CD8-positive, alpha-beta T cell (primary cell): ENCODE measurements at regions of chr14 and their contacts with region 1.

Region 1: DNA sequence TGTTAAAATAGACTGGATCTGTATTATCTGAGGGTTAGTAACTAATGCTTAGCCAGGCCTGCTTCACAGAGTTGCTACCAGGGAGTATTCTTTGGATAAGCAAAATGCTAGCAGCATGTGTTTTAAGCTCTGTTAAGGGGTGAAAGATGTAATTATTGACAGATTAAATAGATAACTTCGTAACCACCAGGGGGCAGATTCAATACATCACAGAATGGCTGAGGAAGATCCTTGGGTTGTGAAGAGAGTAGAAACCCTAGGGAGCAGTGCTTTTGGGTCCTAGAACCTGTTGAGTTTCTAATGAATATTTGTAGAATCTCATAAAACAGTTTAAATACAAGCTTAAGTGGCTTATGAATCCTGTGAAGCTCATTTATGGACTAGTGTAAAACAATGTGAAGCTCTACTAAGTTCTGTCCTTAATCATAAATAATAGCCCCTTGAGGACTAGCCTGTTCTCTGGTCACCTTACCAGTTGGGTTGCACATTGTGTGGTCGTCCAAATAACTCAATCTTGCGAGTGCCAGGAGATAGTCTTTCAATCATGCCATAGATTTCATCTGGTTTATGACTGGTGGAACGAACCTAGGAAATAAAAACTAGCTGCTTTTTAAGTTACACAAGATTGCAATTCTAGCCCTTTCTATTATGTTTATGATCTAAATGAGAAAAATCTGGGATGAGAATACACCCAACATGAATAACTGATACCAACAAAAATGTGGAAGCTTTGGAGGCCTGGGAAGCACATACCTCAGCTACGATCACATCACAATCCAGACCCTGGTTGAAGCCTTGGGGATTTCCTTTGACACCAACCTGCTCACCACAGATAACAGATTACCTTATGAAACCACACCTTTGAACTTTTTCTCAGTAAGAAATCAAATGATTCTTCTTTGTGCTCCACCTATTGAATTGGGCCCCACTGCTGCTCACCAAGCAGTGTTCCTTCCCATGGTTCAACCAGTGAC is 12.3 kb downstream of the METTL3 start:
- DNase-seq: peak in 3 of 9 experiments; percentile 47 to 76 (median 67)
- ATAC-seq: peak; percentile 77
- H3K4me3 ChIP-seq: no peak overlapping the region
- H3K4me3 Mint-ChIP-seq: no peak overlapping the region
- H3K27ac ChIP-seq: peak overlapping the region; percentile 6 to 23
- H3K27ac Mint-ChIP-seq: peak overlapping the region; percentile 73
- H3K4me1 ChIP-seq: peaks cover 13% of the 10 kb centered on the region
- H3K4me1 Mint-ChIP-seq: peaks cover 19% of the 10 kb centered on the region
- H3K27me3 ChIP-seq: no peaks in the 10 kb centered on the region
- H3K27me3 Mint-ChIP-seq: no peaks in the 10 kb centered on the region
- CTCF ChIP-seq: peak; percentile 70

Region 2: DNA sequence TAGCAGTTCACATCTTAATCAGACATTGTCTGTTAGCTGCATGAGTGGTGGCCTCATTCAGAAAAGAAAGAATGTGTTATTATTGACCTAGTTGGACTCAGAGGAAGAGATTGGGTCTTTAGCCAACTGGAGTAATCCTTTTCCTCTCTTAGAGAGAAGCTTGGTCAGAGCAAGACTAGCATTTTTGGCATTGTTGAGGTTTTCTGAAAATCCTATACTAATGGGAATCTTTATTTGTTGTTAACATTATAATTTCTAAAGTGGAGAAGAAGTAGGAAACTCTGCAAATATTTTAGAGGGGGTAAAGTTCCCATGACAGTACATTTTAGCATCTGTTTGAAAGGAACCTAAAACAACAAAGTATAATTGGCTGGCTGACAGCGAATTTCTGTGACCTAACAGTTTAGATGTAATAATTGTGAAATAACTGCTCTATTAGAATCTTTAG is 12.2 kb before region 1 on chr14:
- CTCF ChIA-PET with region 1: interaction called, 12 read pairs
- POLR2A ChIA-PET with region 1: interaction called, 3 read pairs
- intact Hi-C with region 1: no loop called
- DNase-seq: no peak
- ATAC-seq: no peak
- H3K4me3 ChIP-seq: no peak overlapping the region
- H3K4me3 Mint-ChIP-seq: no peak overlapping the region
- H3K27ac ChIP-seq: no peak overlapping the region
- H3K27ac Mint-ChIP-seq: no peak overlapping the region
- H3K4me1 ChIP-seq: no peaks in the 10 kb centered on the region
- H3K4me1 Mint-ChIP-seq: peaks cover 8% of the 10 kb centered on the region
- H3K27me3 ChIP-seq: no peaks in the 10 kb centered on the region
- H3K27me3 Mint-ChIP-seq: no peaks in the 10 kb centered on the region
- CTCF ChIP-seq: no peak

Region 3: DNA sequence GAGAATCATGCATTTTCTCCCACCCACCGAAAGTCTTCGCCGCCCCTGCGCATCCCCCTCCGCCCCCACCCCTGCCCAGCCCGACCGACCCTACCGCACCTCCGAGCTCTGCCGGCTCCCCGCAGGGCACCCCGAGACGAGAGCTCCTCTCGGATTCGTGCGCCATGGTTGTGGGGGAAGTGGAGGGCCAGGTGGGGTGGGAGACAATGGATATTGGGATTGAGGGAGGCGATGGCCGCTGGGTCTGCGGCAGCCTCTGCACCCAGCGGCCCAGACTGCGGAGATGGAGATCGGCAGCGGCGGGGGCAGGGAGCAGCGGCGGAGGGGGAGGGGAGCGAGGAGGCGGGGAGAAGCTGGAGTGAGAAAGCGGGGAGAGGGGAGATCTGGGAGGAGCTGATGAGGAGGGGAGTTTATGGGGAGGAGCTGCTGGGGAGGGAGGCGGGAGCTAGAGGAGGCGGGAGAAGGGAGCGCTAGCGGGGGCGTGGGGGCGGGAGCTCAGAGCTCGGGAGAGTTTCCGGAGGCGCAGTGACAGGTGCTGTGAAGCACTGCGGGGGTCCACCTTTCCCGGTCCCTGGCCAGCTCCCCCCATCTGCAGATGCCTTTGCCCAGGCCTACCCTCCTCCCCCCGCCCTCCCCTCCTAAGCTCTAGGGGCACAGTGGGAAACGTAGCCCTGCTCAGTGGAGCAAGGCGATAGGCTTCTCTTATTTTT is 27.3 kb after region 1 on chr14 and contains the start of gene SALL2:
- CTCF ChIA-PET with region 1: interaction called, 13 read pairs
- POLR2A ChIA-PET with region 1: interaction called, 7 read pairs
- intact Hi-C with region 1: no loop called
- DNase-seq: peak; percentile 12 to 81 (median 64)
- ATAC-seq: peak; percentile 88
- H3K4me3 ChIP-seq: peak within 1 kb of the TSS; percentile 57 to 62
- H3K4me3 Mint-ChIP-seq: peak within 1 kb of the TSS; percentile 82
- H3K27ac ChIP-seq: peak within 1 kb of the TSS in 1 of 2 experiments; percentile 29
- H3K27ac Mint-ChIP-seq: peak within 1 kb of the TSS; percentile 84
- H3K4me1 ChIP-seq: peaks cover 14% of the 10 kb centered on the region
- H3K4me1 Mint-ChIP-seq: peaks cover 19% of the 10 kb centered on the region
- H3K27me3 ChIP-seq: no peaks in the 10 kb centered on the region
- H3K27me3 Mint-ChIP-seq: no peaks in the 10 kb centered on the region
- CTCF ChIP-seq: no peak
- total RNA-seq, gene SALL2: 1.4 to 1.6 TPM